ENCODE measurements at regions of chr7 and their contacts with region 1.

Region 1: GRCh38 chr7:7182156-7183060 is at the start of gene C1GALT1:
- DNase-seq: peak; percentile 96 to 99
- ATAC-seq: peak; percentile 83 to 95 (median 86)
- H3K4me3 ChIP-seq: peak within 1 kb of the TSS; percentile 79
- H3K4me3 Mint-ChIP-seq: peak within 1 kb of the TSS; percentile 94
- H3K27ac ChIP-seq: peak within 1 kb of the TSS; percentile 90
- H3K27ac Mint-ChIP-seq: peak within 1 kb of the TSS in 1 of 2 donors; percentile 100
- H3K4me1 ChIP-seq: peaks cover 19% of the 10 kb centered on the region
- H3K4me1 Mint-ChIP-seq: peaks cover 13 to 22% of the 10 kb centered on the region in 2 donors
- H3K27me3 ChIP-seq: no peaks in the 10 kb centered on the region
- H3K27me3 Mint-ChIP-seq: no peaks in the 10 kb centered on the region
- CTCF ChIP-seq: peak; percentile 46
- total RNA-seq, gene C1GALT1: 54.5 to 64.5 (median 63.7) TPM

Region 2: GRCh38 chr7:6706677-6707544 is 475.5 kb before region 1 on chr7 and contains the start of gene ZNF12:
- intact Hi-C with region 1: no loop called
- DNase-seq: peak; percentile 92 to 98
- ATAC-seq: peak; percentile 88 to 93 (median 91)
- H3K4me3 ChIP-seq: peak within 1 kb of the TSS; percentile 69
- H3K4me3 Mint-ChIP-seq: peak within 1 kb of the TSS; percentile 94
- H3K27ac ChIP-seq: peak within 1 kb of the TSS; percentile 69
- H3K27ac Mint-ChIP-seq: peak within 1 kb of the TSS; percentile 89 to 91
- H3K4me1 ChIP-seq: peaks cover 32% of the 10 kb centered on the region
- H3K4me1 Mint-ChIP-seq: peaks cover 43 to 46% of the 10 kb centered on the region in 2 donors
- H3K27me3 ChIP-seq: no peaks in the 10 kb centered on the region
- H3K27me3 Mint-ChIP-seq: peaks cover 16% of the 10 kb centered on the region in 2 donors
- CTCF ChIP-seq: no peak
- total RNA-seq, gene ZNF12: 27.5 to 38.4 (median 28.1) TPM

Region 3: GRCh38 chr7:7221602-7222038 is 39.2 kb after region 1 on chr7:
- intact Hi-C with region 1: loop called (anchors 5 kb)
- DNase-seq: no peak
- ATAC-seq: peak; percentile 49 to 82 (median 52)
- H3K4me3 ChIP-seq: no peak overlapping the region
- H3K4me3 Mint-ChIP-seq: no peak overlapping the region
- H3K27ac ChIP-seq: no peak overlapping the region
- H3K27ac Mint-ChIP-seq: peak overlapping the region; percentile 63 to 81
- H3K4me1 ChIP-seq: peaks cover 7% of the 10 kb centered on the region
- H3K4me1 Mint-ChIP-seq: peaks cover 50 to 53% of the 10 kb centered on the region in 2 donors
- H3K27me3 ChIP-seq: no peaks in the 10 kb centered on the region
- H3K27me3 Mint-ChIP-seq: no peaks in the 10 kb centered on the region
- CTCF ChIP-seq: no peak

Region 4: GRCh38 chr7:7237201-7237977 is 55.0 kb after region 1 on chr7:
- intact Hi-C with region 1: loop called (anchors 5 kb)
- DNase-seq: peak in 1 of 2 donors; percentile 6
- ATAC-seq: peak; percentile 93 to 96 (median 94)
- H3K4me3 ChIP-seq: no peak overlapping the region
- H3K4me3 Mint-ChIP-seq: peak overlapping the region; percentile 28
- H3K27ac ChIP-seq: peak overlapping the region; percentile 67
- H3K27ac Mint-ChIP-seq: peak overlapping the region; percentile 87 to 93
- H3K4me1 ChIP-seq: no peaks in the 10 kb centered on the region
- H3K4me1 Mint-ChIP-seq: peaks cover 33 to 37% of the 10 kb centered on the region in 2 donors
- H3K27me3 ChIP-seq: no peaks in the 10 kb centered on the region
- H3K27me3 Mint-ChIP-seq: no peaks in the 10 kb centered on the region
- CTCF ChIP-seq: no peak

Region 5: GRCh38 chr7:7257899-7258692 is 75.7 kb after region 1 on chr7:
- intact Hi-C with region 1: loop called (anchors 1 kb)
- DNase-seq: peak; percentile 24 to 56
- ATAC-seq: peak; percentile 73 to 86 (median 84)
- H3K4me3 ChIP-seq: peak overlapping the region; percentile 39
- H3K4me3 Mint-ChIP-seq: peak overlapping the region; percentile 84
- H3K27ac ChIP-seq: peak overlapping the region; percentile 89
- H3K27ac Mint-ChIP-seq: peak overlapping the region; percentile 90 to 94
- H3K4me1 ChIP-seq: peaks cover 36% of the 10 kb centered on the region
- H3K4me1 Mint-ChIP-seq: peaks cover 51 to 66% of the 10 kb centered on the region in 2 donors
- H3K27me3 ChIP-seq: no peaks in the 10 kb centered on the region
- H3K27me3 Mint-ChIP-seq: no peaks in the 10 kb centered on the region
- CTCF ChIP-seq: no peak

Region 6: DNA sequence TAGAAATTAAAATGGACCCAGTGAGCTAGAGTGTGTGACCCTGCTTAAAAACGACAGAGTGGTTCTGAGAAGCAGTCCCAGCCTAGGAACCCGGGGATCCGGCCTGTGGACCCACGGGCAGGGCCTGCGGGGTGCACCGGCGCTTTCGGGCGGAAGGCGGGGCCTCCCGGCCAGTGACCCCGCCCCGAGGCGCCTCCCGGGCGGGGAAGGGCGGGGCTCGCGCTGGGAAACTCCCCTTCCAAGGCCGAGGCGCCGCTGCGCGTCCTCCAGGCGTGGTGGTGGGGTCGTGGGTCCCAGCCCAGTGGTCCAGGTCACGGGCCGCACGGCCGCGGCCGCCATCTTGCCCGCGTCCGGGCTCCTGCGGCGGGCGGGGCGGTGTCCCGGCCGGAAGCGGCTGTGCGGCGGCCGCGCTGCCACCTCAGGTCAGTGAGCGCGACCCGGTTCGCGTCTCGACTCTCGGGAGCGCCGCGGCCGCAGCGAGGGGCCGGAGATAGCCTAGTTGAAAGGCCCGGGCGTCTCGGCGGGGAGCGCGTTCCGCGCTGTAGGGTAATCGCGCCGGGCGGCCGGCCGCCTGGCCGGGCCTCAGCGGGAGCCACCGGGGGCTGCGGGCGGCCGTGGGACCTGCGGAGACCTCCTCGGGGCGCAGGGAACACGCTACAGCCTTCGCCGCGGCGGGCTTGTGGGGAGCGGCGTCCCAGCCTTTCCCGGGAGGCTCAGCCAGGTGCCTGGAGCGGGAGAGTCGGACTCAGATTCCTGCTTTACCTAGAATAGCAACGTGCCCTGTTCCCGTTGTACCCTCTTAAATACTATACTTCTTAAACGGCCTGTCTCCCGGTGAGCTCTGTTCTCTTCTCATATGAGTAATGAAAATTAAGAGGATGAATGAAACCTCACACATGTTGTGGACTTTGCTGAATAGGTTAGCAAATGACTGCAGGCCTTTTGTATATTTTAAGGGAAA is 384.5 kb after region 1 on chr7 and contains the start of gene MIOS:
- intact Hi-C with region 1: loop called (anchors 2 kb)
- DNase-seq: peak; percentile 87 to 92
- ATAC-seq: peak; percentile 93 to 96 (median 94)
- H3K4me3 ChIP-seq: peak within 1 kb of the TSS; percentile 85
- H3K4me3 Mint-ChIP-seq: peak within 1 kb of the TSS; percentile 87
- H3K27ac ChIP-seq: peak within 1 kb of the TSS; percentile 92
- H3K27ac Mint-ChIP-seq: peak within 1 kb of the TSS in 1 of 2 donors; percentile 66
- H3K4me1 ChIP-seq: peaks cover 14% of the 10 kb centered on the region
- H3K4me1 Mint-ChIP-seq: peaks cover 37 to 38% of the 10 kb centered on the region in 2 donors
- H3K27me3 ChIP-seq: no peaks in the 10 kb centered on the region
- H3K27me3 Mint-ChIP-seq: no peaks in the 10 kb centered on the region
- CTCF ChIP-seq: no peak
- total RNA-seq, gene MIOS: 23.5 to 30.9 (median 28.9) TPM

Region 7: DNA sequence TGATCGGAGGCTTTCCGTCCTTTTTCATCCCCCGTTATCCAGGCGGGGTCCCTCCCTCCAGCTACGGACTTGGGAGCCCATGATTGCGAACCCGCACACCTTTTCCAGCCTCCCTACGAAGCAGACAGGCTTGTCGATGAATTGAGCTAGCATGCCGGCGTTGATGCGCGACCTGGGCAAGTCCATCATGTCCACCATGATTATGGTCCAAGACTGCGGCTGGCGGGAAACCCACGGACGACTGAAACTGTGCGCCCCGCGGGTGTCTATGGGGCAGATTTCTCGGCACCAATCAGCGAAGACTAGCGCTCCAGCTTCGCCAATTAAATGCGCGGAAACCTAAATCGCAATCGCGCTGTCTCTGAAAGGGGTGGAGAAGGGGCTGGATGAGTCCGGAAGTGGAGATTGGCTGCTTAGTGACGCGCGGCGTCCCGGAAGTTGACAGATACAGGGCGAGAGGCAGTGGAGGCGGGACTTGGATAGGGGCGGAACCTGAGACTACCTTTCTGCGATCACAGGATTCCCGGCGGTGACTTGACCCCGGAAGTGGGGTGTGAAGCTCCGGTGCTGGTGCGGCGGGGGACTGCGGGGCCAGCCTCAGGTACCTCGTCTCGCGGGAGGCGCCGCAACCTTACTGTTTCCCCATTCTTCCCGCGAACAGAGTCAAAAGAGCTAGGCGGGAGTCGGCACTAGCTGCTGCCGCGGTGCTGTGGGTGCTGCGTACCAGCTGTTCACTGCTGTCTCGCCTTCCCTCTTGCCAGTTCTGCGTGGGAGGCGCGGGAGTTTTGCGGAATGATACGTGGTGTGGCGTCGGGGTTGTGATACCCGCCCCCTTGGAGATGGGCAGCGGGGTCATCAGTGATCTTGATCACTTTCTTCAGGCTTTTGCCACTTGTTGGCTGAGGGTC is 458.1 kb after region 1 on chr7 and contains the start of gene UMAD1:
- intact Hi-C with region 1: loop called (anchors 1 kb)
- DNase-seq: peak; percentile 96 to 99
- ATAC-seq: peak; percentile 92 to 99 (median 95)
- H3K4me3 ChIP-seq: peak within 1 kb of the TSS; percentile 77
- H3K4me3 Mint-ChIP-seq: peak within 1 kb of the TSS; percentile 93
- H3K27ac ChIP-seq: peak within 1 kb of the TSS; percentile 90
- H3K27ac Mint-ChIP-seq: peak within 1 kb of the TSS; percentile 94 to 98
- H3K4me1 ChIP-seq: peaks cover 11% of the 10 kb centered on the region
- H3K4me1 Mint-ChIP-seq: peaks cover 26 to 42% of the 10 kb centered on the region in 2 donors
- H3K27me3 ChIP-seq: no peaks in the 10 kb centered on the region
- H3K27me3 Mint-ChIP-seq: no peaks in the 10 kb centered on the region
- CTCF ChIP-seq: no peak
- total RNA-seq, gene UMAD1: 12.3 to 16.5 (median 14.6) TPM

Region 8: DNA sequence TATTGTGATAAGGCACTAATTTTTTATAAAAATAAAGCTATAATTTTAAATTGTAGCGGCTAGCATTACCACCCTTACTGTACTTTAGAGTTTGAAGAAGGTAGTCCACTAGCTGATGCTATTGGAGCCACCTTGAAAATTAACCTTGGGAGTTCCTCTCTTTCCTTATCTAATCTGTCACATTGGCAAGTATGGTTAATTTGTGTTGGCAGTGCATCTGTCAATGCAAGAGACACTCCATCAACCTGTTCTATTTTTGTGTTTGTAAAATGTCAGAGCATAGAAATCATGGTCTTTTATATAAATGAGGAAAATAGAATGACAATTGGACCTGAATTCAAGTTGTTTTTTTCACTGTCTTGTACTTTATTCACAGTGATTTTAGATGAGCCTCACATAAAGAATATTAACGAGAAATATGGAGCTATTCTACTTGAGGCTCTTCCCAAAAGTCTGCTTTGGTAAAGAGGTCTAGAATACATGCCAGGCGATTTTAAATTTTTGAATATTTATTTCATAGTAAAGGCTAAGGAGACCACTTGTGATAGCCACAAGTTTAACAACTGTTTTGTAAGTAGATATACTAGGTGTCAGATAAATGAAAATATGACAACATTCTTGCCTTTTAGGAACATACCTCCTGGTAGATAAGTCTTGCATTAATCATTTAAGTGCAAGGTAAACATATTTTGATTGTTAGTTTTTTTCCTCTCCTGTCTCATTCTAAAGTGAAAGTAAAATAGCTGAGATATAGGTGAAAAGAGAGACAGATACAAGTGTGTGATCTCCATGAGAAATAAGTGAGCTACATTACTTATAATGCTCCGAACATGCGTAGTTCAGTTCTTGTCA is 807.0 kb after region 1 on chr7:
- intact Hi-C with region 1: loop called (anchors 10 kb)
- DNase-seq: peak in 1 of 2 donors; percentile 30
- ATAC-seq: peak; percentile 64 to 77 (median 68)
- H3K4me3 ChIP-seq: peak overlapping the region; percentile 4
- H3K4me3 Mint-ChIP-seq: peak overlapping the region; percentile 84
- H3K27ac ChIP-seq: peak overlapping the region; percentile 61
- H3K27ac Mint-ChIP-seq: peak overlapping the region; percentile 86 to 90
- H3K4me1 ChIP-seq: peaks cover 4% of the 10 kb centered on the region
- H3K4me1 Mint-ChIP-seq: peaks cover 47 to 70% of the 10 kb centered on the region in 2 donors
- H3K27me3 ChIP-seq: no peaks in the 10 kb centered on the region
- H3K27me3 Mint-ChIP-seq: no peaks in the 10 kb centered on the region
- CTCF ChIP-seq: no peak

Measured in natural killer cell (primary cell).